ENCODE measurements at regions of chr11 and their contacts with region 1.

Region 1: GRCh38 chr11:64341851-64342791 is 2.1 kb downstream of the CCDC88B start:
- DNase-seq: peak; percentile 80 to 92
- ATAC-seq: peak; percentile 91 to 93
- H3K4me3 ChIP-seq: peak overlapping the region; percentile 40 to 80 (median 57)
- H3K27ac ChIP-seq: peak overlapping the region; percentile 80 to 91 (median 84)
- H3K4me1 ChIP-seq: peaks cover 0 to 4% of the 10 kb centered on the region in 2 donors
- H3K27me3 ChIP-seq: no peaks in the 10 kb centered on the region
- CTCF ChIP-seq: peak in 4 of 5 experiments; percentile 21 to 62 (median 38)
- POLR2A ChIP-seq: peak; percentile 44 to 47

Region 2: GRCh38 chr11:64304316-64305072 is 37.6 kb before region 1 on chr11:
- in situ Hi-C with region 1: no loop called
- intact Hi-C with region 1: loop called (anchors 5 kb)
- DNase-seq: peak; percentile 77 to 91
- ATAC-seq: peak; percentile 36 to 53
- H3K4me3 ChIP-seq: peak overlapping the region; percentile 58 to 92 (median 64)
- H3K27ac ChIP-seq: peak overlapping the region; percentile 84 to 96 (median 90)
- H3K4me1 ChIP-seq: peaks cover 16 to 34% of the 10 kb centered on the region in 2 donors
- H3K27me3 ChIP-seq: peaks cover 16 to 26% (median 24%) of the 10 kb centered on the region in 3 donors
- CTCF ChIP-seq: peak; percentile 77 to 92 (median 88)
- POLR2A ChIP-seq: no peak

Region 3: GRCh38 chr11:64317957-64318693 is 24.0 kb before region 1 on chr11 and contains the start of gene PRDX5:
- in situ Hi-C with region 1: no loop called
- intact Hi-C with region 1: loop called (anchors 1 kb)
- DNase-seq: peak; percentile 94 to 97
- ATAC-seq: peak; percentile 80 to 85
- H3K4me3 ChIP-seq: peak within 1 kb of the TSS; percentile 73 to 99 (median 91)
- H3K27ac ChIP-seq: peak within 1 kb of the TSS; percentile 88 to 98 (median 94)
- H3K4me1 ChIP-seq: peaks cover 25 to 36% of the 10 kb centered on the region in 2 donors
- H3K27me3 ChIP-seq: no peaks in the 10 kb centered on the region
- CTCF ChIP-seq: peak in 4 of 5 experiments; percentile 34 to 62 (median 56)
- POLR2A ChIP-seq: peak; percentile 73 to 81
- total RNA-seq, gene PRDX5: 170 to 257 (median 219) TPM

Region 4: GRCh38 chr11:64355078-64355940 is 13.2 kb after region 1 on chr11:
- in situ Hi-C with region 1: no loop called
- intact Hi-C with region 1: loop called (anchors 1 kb)
- DNase-seq: peak; percentile 40 to 75
- ATAC-seq: peak; percentile 55 to 63
- H3K4me3 ChIP-seq: peak overlapping the region; percentile 18 to 53 (median 46)
- H3K27ac ChIP-seq: peak overlapping the region; percentile 59 to 67 (median 62)
- H3K4me1 ChIP-seq: peaks cover 5 to 26% of the 10 kb centered on the region in 2 donors
- H3K27me3 ChIP-seq: peaks cover 0 to 7% (median 5%) of the 10 kb centered on the region in 3 donors
- CTCF ChIP-seq: peak; percentile 59 to 78 (median 69)
- POLR2A ChIP-seq: no peak

Region 5: GRCh38 chr11:64713031-64713780 is 371.1 kb after region 1 on chr11:
- in situ Hi-C with region 1: no loop called
- intact Hi-C with region 1: no loop called
- DNase-seq: no peak
- ATAC-seq: no peak
- H3K4me3 ChIP-seq: no peak overlapping the region
- H3K27ac ChIP-seq: no peak overlapping the region
- H3K4me1 ChIP-seq: no peaks in the 10 kb centered on the region
- H3K27me3 ChIP-seq: peaks cover 52 to 76% (median 64%) of the 10 kb centered on the region in 3 donors
- CTCF ChIP-seq: no peak
- POLR2A ChIP-seq: no peak

Region 6: GRCh38 chr11:64864473-64865285 is 522.6 kb after region 1 on chr11:
- in situ Hi-C with region 1: no loop called
- intact Hi-C with region 1: no loop called
- DNase-seq: peak in 1 of 2 donors; percentile 85
- ATAC-seq: peak; percentile 69 to 81
- H3K4me3 ChIP-seq: peak overlapping the region; percentile 7 to 27 (median 20)
- H3K27ac ChIP-seq: peak overlapping the region; percentile 88 to 94 (median 93)
- H3K4me1 ChIP-seq: peaks cover 62 to 72% of the 10 kb centered on the region in 2 donors
- H3K27me3 ChIP-seq: no peaks in the 10 kb centered on the region
- CTCF ChIP-seq: no peak
- POLR2A ChIP-seq: no peak

Measured in gastrocnemius medialis (tissue), 4 donors.